Activated CD8-positive, alpha-beta T cell treated with anti-CD3 and anti-CD28 coated beads for 36 hours (primary cell): ENCODE measurements at regions of chr17 and their contacts with region 1.

Region 1: DNA sequence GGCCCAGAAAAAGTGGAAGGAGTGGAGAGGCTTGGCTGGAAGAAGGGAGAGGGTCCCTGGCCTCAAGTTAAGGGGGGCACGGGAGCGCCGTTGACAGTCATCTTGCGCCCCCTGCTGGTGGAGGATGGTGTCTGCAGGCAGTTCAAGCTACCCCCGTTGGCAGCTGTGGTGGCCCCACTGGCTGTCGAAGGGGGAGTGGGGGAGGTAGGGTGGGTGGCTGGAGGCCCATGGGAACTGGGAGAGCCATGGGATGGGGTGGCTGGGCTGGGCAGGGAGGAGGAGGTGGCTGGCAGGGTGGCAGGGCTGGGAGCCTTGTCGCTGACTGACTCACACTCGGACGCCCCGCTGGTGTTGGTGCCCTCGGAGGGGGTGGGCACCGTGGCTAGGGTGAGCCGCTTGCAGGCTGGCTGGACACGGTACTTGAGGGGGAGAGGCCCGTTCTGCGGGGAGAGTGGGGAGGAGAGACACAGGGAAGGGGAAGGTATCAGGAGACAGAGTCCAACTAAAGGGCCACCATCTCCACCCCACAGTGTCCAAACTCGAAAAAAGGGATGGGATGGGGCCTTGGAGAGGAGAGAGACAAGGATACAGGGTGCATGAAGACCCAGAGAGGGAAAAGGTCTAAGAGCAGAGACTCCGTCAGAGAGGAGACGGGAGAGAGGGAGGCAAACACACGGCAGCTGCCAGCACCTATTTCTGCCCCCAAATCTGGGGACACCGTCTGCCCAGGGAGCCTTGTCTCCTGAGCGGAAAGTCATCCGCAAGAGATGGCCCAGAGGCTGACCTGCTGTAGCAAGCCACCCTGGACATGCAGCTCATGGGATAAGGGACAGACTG is 5.2 kb downstream of the CISD3 start:
- DNase-seq: peak; percentile 82
- ATAC-seq: peak; percentile 34
- H3K4me3 Mint-ChIP-seq: no peak overlapping the region
- H3K27ac Mint-ChIP-seq: peak overlapping the region; percentile 55
- H3K4me1 Mint-ChIP-seq: peaks cover 45% of the 10 kb centered on the region
- H3K27me3 Mint-ChIP-seq: no peaks in the 10 kb centered on the region
- CTCF ChIP-seq: peak; percentile 90

Region 2: DNA sequence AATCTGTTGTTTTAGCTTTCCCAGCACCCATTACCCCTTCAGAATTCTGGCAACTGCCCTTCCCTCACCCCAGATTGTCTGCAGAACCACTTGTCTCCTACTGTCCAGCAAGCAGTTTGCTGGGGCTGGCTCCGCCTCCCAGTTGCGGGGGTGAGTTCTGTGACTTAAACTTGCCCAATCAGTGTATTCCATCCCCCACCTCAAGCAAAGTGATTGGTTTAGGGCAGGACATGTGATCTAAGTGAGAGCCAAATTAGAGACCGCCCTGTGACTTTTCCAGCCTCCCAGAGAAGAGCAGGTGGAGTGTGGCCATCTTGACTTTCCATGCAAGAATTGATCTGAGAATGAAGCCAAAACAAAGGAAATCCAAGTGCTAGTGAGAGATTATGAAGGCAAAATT is 106.9 kb before region 1 on chr17:
- CTCF ChIA-PET with region 1: no interaction called
- POLR2A ChIA-PET with region 1: no interaction called
- intact Hi-C with region 1: no loop called
- DNase-seq: peak; percentile 4
- ATAC-seq: peak; percentile 27
- H3K4me3 Mint-ChIP-seq: no peak overlapping the region
- H3K27ac Mint-ChIP-seq: no peak overlapping the region
- H3K4me1 Mint-ChIP-seq: peaks cover 4% of the 10 kb centered on the region
- H3K27me3 Mint-ChIP-seq: peaks cover 9% of the 10 kb centered on the region
- CTCF ChIP-seq: no peak

Region 3: DNA sequence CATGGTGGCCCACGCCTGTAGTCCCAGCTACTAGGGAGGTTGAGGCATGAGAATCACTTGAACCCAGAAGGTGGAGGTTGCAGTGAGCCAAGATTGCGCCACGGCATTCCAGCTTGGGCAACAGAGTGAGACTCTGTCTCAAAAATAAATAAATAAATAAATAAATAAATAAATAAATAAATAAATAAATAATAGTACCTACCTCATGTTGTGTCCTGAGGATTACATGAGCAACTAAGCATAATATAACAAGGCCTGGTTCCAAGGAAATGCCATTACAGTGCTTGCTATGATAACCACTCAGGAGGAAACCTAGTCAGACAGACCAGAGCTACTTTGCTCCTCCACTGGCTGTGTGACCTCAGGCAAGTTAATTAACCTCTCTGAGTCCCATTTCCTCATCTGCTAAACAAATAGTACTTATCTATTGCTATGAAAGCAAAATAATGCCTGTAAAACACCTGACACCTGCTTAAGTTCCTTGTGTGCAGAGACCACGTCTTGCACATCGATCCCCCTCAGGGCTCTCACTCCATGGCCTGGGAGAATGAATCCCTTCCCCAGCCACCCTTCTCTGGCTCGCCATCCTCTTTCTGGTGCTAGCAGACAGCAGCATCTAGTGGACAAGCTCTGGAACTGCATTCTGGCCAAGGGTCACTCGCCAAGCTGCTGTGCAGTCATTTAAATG is 68.1 kb before region 1 on chr17:
- CTCF ChIA-PET with region 1: interaction called, 160 read pairs
- POLR2A ChIA-PET with region 1: interaction called, 5 read pairs
- intact Hi-C with region 1: no loop called
- DNase-seq: peak; percentile 68
- ATAC-seq: peak; percentile 82
- H3K4me3 Mint-ChIP-seq: no peak overlapping the region
- H3K27ac Mint-ChIP-seq: no peak overlapping the region
- H3K4me1 Mint-ChIP-seq: peaks cover 15% of the 10 kb centered on the region
- H3K27me3 Mint-ChIP-seq: peaks cover 52% of the 10 kb centered on the region
- CTCF ChIP-seq: peak; percentile 98

Region 4: GRCh38 chr17:38685491-38685890 is 49.9 kb before region 1 on chr17:
- CTCF ChIA-PET with region 1: interaction called, 160 read pairs
- POLR2A ChIA-PET with region 1: interaction called, 3 read pairs
- intact Hi-C with region 1: no loop called
- DNase-seq: no peak
- ATAC-seq: no peak
- H3K4me3 Mint-ChIP-seq: no peak overlapping the region
- H3K27ac Mint-ChIP-seq: no peak overlapping the region
- H3K4me1 Mint-ChIP-seq: peaks cover 3% of the 10 kb centered on the region
- H3K27me3 Mint-ChIP-seq: peaks cover 1% of the 10 kb centered on the region
- CTCF ChIP-seq: no peak

Region 5: GRCh38 chr17:38711792-38712571 is 23.4 kb before region 1 on chr17:
- CTCF ChIA-PET with region 1: interaction called, 31 read pairs
- POLR2A ChIA-PET with region 1: interaction called, 5 read pairs
- intact Hi-C with region 1: no loop called
- DNase-seq: peak; percentile 56
- ATAC-seq: peak; percentile 48
- H3K4me3 Mint-ChIP-seq: peak overlapping the region; percentile 28
- H3K27ac Mint-ChIP-seq: peak overlapping the region; percentile 80
- H3K4me1 Mint-ChIP-seq: peaks cover 76% of the 10 kb centered on the region
- H3K27me3 Mint-ChIP-seq: no peaks in the 10 kb centered on the region
- CTCF ChIP-seq: no peak

Region 6: GRCh38 chr17:38724337-38724988 is 10.9 kb before region 1 on chr17:
- CTCF ChIA-PET with region 1: interaction called, 13 read pairs
- POLR2A ChIA-PET with region 1: interaction called, 6 read pairs
- intact Hi-C with region 1: no loop called
- DNase-seq: no peak
- ATAC-seq: no peak
- H3K4me3 Mint-ChIP-seq: no peak overlapping the region
- H3K27ac Mint-ChIP-seq: peak overlapping the region; percentile 63
- H3K4me1 Mint-ChIP-seq: peaks cover 58% of the 10 kb centered on the region
- H3K27me3 Mint-ChIP-seq: no peaks in the 10 kb centered on the region
- CTCF ChIP-seq: no peak